Activated naive CD4-positive, alpha-beta T cell treated with anti-CD3 and anti-CD28 coated beads for 36 hours (primary cell): ENCODE measurements at regions of chr2 and their contacts with region 1.

Region 1: DNA sequence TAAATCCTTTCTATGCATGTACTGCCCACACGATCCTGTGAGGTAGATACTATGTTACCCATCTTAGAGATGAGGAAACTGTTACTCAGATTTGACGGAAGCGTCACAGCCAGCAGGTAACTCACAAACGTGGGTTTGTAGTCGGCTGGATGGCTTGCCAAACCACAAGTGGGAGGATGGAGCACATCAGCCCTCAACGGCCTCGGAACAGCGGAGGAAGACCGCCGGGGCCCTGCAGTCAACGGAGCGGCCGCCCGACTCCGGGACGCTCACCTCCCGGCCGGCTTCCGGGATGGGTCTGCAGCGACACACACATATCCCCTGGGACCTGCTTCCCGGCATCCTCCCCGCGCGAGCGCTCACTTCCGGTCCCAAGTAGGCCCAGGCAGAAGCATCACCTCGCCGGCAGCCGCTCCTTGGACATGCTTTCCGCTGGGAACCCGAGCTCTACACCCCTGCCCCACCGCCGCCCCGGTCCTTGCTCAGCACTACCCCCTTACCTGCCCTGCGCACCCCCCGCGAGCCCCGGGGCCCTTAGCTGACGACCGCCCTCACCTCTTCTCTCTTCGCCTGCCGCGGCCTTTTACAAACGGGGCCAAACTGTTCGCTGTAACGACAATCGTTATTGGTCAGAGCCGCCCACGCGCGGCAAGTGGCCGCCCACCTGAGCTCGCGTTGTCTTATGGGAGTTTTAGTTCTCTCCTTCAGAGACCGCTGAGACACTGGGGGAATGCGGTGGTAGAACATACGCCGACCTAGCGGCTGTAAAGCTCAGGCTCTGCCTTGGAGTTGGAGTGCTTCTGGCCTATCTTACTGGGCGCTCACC is at the start of gene C2orf42:
- DNase-seq: peak; percentile 98
- H3K4me3 Mint-ChIP-seq: peak within 1 kb of the TSS; percentile 87
- H3K27ac Mint-ChIP-seq: peak within 1 kb of the TSS; percentile 98
- H3K4me1 Mint-ChIP-seq: peaks cover 21% of the 10 kb centered on the region
- H3K27me3 Mint-ChIP-seq: no peaks in the 10 kb centered on the region
- total RNA-seq, gene C2orf42: 19.2 to 23.3 TPM

Region 2: DNA sequence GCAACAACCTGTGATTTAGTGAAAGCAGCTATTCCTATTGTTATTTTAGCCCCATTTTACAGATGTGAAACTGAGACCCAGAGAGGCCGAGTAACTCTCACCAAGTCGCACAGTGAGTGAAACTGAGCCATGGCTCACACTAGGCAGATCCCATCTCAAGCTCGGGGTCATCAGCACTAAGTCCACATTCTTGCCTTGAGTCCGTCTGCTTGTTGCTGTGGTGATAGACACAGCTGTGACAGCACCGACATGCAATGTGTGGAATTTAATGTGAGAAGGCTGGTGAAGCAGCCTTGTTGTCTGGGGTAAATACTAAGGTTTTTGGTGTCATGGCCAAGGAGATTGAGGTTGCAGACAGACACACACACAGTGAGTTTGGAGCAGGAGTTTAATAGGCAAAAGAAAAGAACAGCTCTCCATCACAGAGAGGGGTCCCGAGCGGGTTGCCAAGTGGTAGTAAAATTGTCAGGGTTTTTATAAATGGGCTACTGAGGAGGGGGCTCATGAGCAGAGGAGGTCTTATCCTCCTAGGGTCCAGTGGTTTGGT is 401.4 kb before region 1 on chr2:
- CTCF ChIA-PET with region 1: no interaction called
- intact Hi-C with region 1: no loop called
- DNase-seq: no peak
- H3K4me3 Mint-ChIP-seq: no peak overlapping the region
- H3K27ac Mint-ChIP-seq: no peak overlapping the region
- H3K4me1 Mint-ChIP-seq: peaks cover 8% of the 10 kb centered on the region
- H3K27me3 Mint-ChIP-seq: no peaks in the 10 kb centered on the region

Region 3: GRCh38 chr2:69893684-69894551 is 296.7 kb before region 1 on chr2 and contains the start of gene SNRNP27:
- CTCF ChIA-PET with region 1: no interaction called
- intact Hi-C with region 1: loop called (anchors 2 kb)
- DNase-seq: peak; percentile 91
- H3K4me3 Mint-ChIP-seq: peak within 1 kb of the TSS; percentile 98
- H3K27ac Mint-ChIP-seq: peak within 1 kb of the TSS; percentile 97
- H3K4me1 Mint-ChIP-seq: peaks cover 41% of the 10 kb centered on the region
- H3K27me3 Mint-ChIP-seq: no peaks in the 10 kb centered on the region
- total RNA-seq, gene SNRNP27: 56.7 to 64.6 TPM

Region 4: DNA sequence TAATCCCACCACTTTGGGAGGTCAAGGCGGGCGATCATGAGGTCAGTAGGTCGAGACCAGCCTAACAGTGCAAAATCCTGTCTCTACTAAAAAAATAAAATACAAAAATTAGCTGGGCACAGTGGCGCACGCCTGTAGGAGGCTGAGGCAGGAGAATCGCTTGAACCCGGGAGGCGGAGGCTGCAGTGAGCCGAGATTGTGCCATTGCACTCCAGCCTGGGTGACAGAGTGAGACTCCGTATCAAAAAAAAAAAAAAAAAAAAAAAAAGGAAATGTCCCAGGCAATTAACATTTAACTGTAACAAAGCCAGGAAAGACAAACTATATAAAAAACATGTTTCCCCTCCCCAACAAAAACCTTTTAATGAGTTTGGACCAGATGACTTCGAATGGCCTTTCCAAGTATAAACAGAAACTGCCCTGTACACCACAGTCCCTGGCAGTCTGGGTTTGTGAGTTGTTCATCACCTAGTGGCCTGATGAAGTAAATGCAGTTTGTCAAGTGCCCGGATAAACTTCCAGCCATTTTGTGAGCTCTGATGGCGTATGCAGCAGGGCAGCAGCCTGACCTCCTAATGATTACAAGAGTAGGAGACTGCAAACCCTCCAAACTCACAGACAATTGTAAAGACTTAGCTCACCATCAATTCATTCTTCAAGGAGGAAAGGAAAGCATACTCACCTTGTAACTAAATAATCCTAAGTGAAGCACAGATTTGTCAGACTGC is 119.9 kb before region 1 on chr2:
- CTCF ChIA-PET with region 1: no interaction called
- intact Hi-C with region 1: loop called (anchors 1 kb)
- DNase-seq: peak; percentile 76
- H3K4me3 Mint-ChIP-seq: peak overlapping the region; percentile 54
- H3K27ac Mint-ChIP-seq: peak overlapping the region; percentile 94
- H3K4me1 Mint-ChIP-seq: peaks cover 57% of the 10 kb centered on the region
- H3K27me3 Mint-ChIP-seq: no peaks in the 10 kb centered on the region

Region 5: DNA sequence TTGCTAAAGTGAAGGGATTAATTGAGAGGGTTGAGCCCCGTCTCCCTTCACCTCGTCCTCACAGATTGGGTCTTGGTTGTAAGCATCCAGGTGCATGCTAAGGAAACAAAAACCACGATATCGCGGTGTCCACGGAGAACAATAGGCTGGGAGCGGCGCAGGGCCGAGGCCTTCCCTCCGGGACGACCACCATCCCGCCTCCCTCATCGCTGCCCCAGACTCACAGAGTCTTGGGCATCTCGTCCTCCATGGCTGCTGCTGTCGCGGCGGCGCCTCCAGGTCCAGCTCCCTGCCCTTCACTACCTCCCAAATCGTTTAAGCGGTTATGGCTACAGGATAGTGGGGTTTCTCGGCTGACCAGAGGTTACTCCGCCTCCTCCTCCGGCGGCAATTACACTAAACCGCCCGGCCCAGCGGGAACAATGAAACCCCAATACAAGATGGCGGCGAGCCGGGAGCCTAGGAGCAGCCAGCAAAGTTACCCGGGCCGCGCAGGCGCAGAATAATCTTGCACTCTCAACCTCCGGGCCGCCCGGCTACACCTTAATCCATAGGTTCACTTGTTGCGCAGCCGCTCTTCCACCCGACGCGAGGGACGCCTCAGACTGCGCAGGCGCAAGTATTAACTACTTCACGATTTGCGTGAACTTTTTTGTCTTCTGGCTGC is 57.7 kb after region 1 on chr2 and contains the start of gene TIA1:
- CTCF ChIA-PET with region 1: no interaction called
- intact Hi-C with region 1: loop called (anchors 1 kb)
- DNase-seq: peak; percentile 99
- H3K4me3 Mint-ChIP-seq: peak within 1 kb of the TSS; percentile 99
- H3K27ac Mint-ChIP-seq: peak within 1 kb of the TSS; percentile 98
- H3K4me1 Mint-ChIP-seq: peaks cover 32% of the 10 kb centered on the region
- H3K27me3 Mint-ChIP-seq: no peaks in the 10 kb centered on the region
- total RNA-seq, gene TIA1: 83.2 to 83.9 TPM

Region 6: GRCh38 chr2:70258532-70258874 is 67.9 kb after region 1 on chr2:
- CTCF ChIA-PET with region 1: no interaction called
- intact Hi-C with region 1: loop called (anchors 1 kb)
- DNase-seq: no peak
- H3K4me3 Mint-ChIP-seq: peak overlapping the region; percentile 91
- H3K27ac Mint-ChIP-seq: no peak overlapping the region
- H3K4me1 Mint-ChIP-seq: peaks cover 34% of the 10 kb centered on the region
- H3K27me3 Mint-ChIP-seq: no peaks in the 10 kb centered on the region

Region 7: DNA sequence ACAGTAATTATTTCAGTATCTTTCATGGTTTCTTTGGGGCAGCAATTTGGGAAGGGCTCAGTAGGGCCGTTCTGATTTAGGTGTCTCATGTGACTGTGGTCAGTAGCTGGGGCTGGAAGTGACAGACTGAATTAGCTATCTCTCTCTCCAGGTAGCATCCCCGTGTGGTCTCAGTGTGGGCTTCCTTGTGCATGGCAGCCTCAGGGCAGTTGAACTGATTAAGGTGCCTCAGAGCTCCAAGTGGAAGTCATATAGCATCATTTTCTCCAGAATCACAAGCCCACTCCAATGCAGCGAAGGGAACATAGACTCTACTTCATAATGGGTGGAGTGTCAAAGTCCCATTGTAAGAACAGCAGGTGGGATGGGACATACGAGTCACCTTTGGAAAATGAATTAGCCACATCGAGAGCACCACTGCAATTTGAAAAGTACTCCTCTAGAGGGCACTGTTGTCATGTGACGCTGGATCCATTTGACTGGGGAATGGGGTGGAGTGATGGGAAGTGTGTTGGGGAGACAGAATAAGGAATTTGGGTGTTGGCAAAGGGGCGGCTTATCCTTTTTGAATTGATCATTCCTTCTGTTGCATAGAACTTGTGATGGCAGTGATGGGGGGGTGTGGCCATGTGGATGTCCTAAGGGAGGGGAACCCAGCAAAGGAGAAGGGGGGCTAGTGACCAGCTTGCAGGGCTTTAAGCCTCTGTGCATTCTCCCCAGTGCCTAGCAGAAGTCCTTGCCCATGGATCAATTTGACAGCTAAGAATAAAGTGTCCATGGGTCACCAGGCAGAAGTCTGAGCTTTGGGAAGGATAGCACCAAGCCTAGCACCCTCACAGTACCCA is 150.5 kb after region 1 on chr2:
- CTCF ChIA-PET with region 1: no interaction called
- intact Hi-C with region 1: no loop called
- DNase-seq: peak; percentile 60
- H3K4me3 Mint-ChIP-seq: no peak overlapping the region
- H3K27ac Mint-ChIP-seq: no peak overlapping the region
- H3K4me1 Mint-ChIP-seq: peaks cover 5% of the 10 kb centered on the region
- H3K27me3 Mint-ChIP-seq: no peaks in the 10 kb centered on the region

Region 8: GRCh38 chr2:70767699-70768589 is 577.3 kb after region 1 on chr2 and contains the start of gene ADD2:
- CTCF ChIA-PET with region 1: no interaction called
- intact Hi-C with region 1: loop called (anchors 5 kb)
- DNase-seq: peak; percentile 89
- H3K4me3 Mint-ChIP-seq: peak within 1 kb of the TSS; percentile 91
- H3K27ac Mint-ChIP-seq: peak within 1 kb of the TSS; percentile 83
- H3K4me1 Mint-ChIP-seq: peaks cover 8% of the 10 kb centered on the region
- H3K27me3 Mint-ChIP-seq: peaks cover 10% of the 10 kb centered on the region
- total RNA-seq, gene ADD2: 42.9 to 46.2 TPM